IMR-90 (cell line): ENCODE measurements at regions of chr9 and their contacts with region 1.

Region 1: GRCh38 chr9:35553670-35554543 is 51.2 kb upstream of the TESK1 start:
- DNase-seq: peak; percentile 73
- ATAC-seq: peak; percentile 91
- H3K4me3 ChIP-seq: no peak overlapping the region
- H3K27ac ChIP-seq: no peak overlapping the region
- H3K4me1 ChIP-seq: peaks cover 10% of the 10 kb centered on the region
- H3K27me3 ChIP-seq: no peaks in the 10 kb centered on the region
- CTCF ChIP-seq: peak; percentile 98
- POLR2A ChIP-seq: peak; percentile 59; the same call in 1 of the 2 replicates
- RAD21 ChIP-seq: peak; percentile 99

Region 2: GRCh38 chr9:35277628-35278359 is 276.1 kb before region 1 on chr9:
- CTCF ChIA-PET with region 1: no interaction called
- POLR2A ChIA-PET with region 1: no interaction called
- dilution Hi-C with region 1: no loop called
- in situ Hi-C with region 1: no loop called
- intact Hi-C with region 1: loop called (anchors 10 kb)
- DNase-seq: peak; percentile 87
- ATAC-seq: peak; percentile 72
- H3K4me3 ChIP-seq: no peak overlapping the region
- H3K27ac ChIP-seq: no peak overlapping the region
- H3K4me1 ChIP-seq: peaks cover 2% of the 10 kb centered on the region; the same call in 1 of the 2 replicates
- H3K27me3 ChIP-seq: no peaks in the 10 kb centered on the region
- CTCF ChIP-seq: no peak
- POLR2A ChIP-seq: no peak
- RAD21 ChIP-seq: no peak

Region 3: DNA sequence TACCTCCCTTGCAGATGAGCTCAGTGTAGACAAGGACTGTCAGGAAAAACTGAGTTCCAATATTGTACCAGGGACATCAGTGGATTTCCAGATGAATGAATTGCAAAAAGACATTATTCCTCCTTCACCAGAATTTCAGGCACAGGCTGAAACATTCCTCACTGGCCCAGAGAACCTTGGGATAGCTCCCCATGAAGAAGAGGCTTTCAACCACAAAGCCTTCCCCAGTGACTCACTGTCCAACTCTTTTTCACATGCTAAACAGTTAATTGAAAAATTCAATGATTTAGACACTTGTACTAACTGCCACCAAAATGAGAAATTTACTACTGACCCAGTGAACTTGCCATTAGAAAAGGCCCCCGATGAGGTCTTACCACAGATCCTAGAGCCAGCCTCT is 247.6 kb before region 1 on chr9:
- CTCF ChIA-PET with region 1: no interaction called
- POLR2A ChIA-PET with region 1: no interaction called
- dilution Hi-C with region 1: no loop called
- in situ Hi-C with region 1: no loop called
- intact Hi-C with region 1: no loop called
- DNase-seq: peak; percentile 45
- ATAC-seq: peak; percentile 75
- H3K4me3 ChIP-seq: no peak overlapping the region
- H3K27ac ChIP-seq: no peak overlapping the region
- H3K4me1 ChIP-seq: no peaks in the 10 kb centered on the region
- H3K27me3 ChIP-seq: no peaks in the 10 kb centered on the region
- CTCF ChIP-seq: no peak
- POLR2A ChIP-seq: no peak
- RAD21 ChIP-seq: no peak

Region 4: GRCh38 chr9:35489313-35490154 is 64.4 kb before region 1 on chr9 and contains the start of gene RUSC2:
- CTCF ChIA-PET with region 1: interaction called, 18 read pairs
- POLR2A ChIA-PET with region 1: interaction called, 13 read pairs
- dilution Hi-C with region 1: no loop called
- in situ Hi-C with region 1: loop called (anchors 5 kb)
- intact Hi-C with region 1: loop called (anchors 1 kb)
- DNase-seq: peak; percentile 90
- ATAC-seq: peak; percentile 85
- H3K4me3 ChIP-seq: peak within 1 kb of the TSS; percentile 89
- H3K27ac ChIP-seq: peak within 1 kb of the TSS; percentile 96
- H3K4me1 ChIP-seq: peaks cover 3% of the 10 kb centered on the region
- H3K27me3 ChIP-seq: no peaks in the 10 kb centered on the region
- CTCF ChIP-seq: peak; percentile 41
- POLR2A ChIP-seq: peak; percentile 68
- RAD21 ChIP-seq: peak; percentile 52
- total RNA-seq, gene RUSC2: 17.4 and 18.3 TPM in 2 replicates

Region 5: DNA sequence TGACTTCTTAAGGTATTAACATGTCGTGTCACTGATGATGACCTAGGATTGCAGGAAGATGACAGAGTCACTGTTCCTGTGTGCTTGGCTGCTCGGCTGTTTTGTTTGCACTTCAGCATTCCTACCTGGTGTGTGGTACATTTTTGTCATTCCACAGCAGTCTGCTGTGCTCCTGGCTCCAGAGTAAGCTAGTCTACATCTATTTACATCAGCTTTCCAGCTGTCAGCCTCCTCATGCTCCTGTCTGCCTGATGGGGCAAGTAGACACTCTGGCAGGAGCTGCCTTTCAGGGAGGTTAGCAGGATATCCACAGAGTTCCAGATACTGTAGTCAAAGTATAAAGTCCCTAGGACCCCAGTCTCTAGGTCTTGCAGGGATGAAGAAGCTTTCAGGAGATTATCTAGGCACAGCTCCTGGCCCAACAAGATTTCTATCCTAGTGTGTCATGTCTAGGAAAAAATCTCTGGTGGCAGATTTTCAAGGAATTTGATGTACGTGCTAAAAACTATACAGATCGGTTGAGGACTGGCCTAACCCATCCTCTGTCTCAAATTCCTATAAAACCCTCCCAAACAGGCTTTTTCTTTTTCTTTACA is 35.6 kb before region 1 on chr9:
- CTCF ChIA-PET with region 1: interaction called, 5 read pairs
- POLR2A ChIA-PET with region 1: no interaction called
- dilution Hi-C with region 1: no loop called
- in situ Hi-C with region 1: no loop called
- intact Hi-C with region 1: loop called (anchors 2 kb)
- DNase-seq: peak; percentile 94
- ATAC-seq: peak; percentile 68
- H3K4me3 ChIP-seq: no peak overlapping the region
- H3K27ac ChIP-seq: peak overlapping the region; percentile 94
- H3K4me1 ChIP-seq: peaks cover 42% of the 10 kb centered on the region
- H3K27me3 ChIP-seq: no peaks in the 10 kb centered on the region
- CTCF ChIP-seq: no peak
- POLR2A ChIP-seq: peak; percentile 49; the same call in 1 of the 2 replicates
- RAD21 ChIP-seq: no peak

Region 6: DNA sequence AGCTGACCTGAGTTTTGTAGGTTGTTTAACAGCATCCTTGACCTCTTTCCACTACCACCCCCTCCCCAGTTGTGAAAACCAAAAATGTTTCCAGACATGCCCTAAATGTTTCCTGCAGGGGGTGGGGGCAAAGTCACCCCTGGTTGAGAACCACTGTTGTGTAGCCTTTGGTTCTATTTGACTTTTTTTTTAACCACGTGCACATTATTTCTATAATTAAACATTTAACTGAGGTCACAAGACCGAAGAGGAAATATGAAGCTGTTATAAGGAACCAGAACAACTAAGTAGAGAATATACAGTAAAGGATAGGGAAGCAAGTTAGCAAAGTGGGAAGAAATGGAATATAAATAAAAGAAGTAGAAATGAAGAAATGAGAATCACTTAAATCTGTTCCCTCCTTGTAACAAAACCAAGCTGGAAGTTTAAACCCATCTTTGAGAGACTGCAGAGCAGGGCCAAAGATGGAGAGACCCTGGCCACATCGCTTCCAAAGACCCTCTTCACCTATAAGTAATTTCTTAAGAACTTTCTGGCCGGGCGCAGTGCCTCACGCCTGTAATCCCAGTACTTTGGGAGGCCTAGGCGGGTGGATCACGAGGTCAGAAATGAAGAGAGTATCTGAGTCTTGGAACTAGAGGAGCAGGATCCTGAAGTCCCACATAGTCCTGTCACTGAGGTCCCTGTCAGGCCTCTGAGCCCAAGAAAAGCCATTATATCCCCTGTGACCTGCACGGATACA is 82.4 kb after region 1 on chr9:
- CTCF ChIA-PET with region 1: no interaction called
- POLR2A ChIA-PET with region 1: no interaction called
- dilution Hi-C with region 1: no loop called
- in situ Hi-C with region 1: no loop called
- intact Hi-C with region 1: no loop called
- DNase-seq: no peak
- ATAC-seq: no peak
- H3K4me3 ChIP-seq: no peak overlapping the region
- H3K27ac ChIP-seq: no peak overlapping the region
- H3K4me1 ChIP-seq: no peaks in the 10 kb centered on the region
- H3K27me3 ChIP-seq: no peaks in the 10 kb centered on the region; the same call in 1 of the 2 replicates
- CTCF ChIP-seq: no peak
- POLR2A ChIP-seq: no peak
- RAD21 ChIP-seq: no peak

Region 7: GRCh38 chr9:35760651-35761050 is 206.7 kb after region 1 on chr9:
- CTCF ChIA-PET with region 1: interaction called, 10 read pairs
- POLR2A ChIA-PET with region 1: no interaction called
- dilution Hi-C with region 1: no loop called
- in situ Hi-C with region 1: no loop called
- intact Hi-C with region 1: no loop called
- DNase-seq: peak; percentile 41
- ATAC-seq: no peak
- H3K4me3 ChIP-seq: no peak overlapping the region
- H3K27ac ChIP-seq: no peak overlapping the region
- H3K4me1 ChIP-seq: peaks cover 7% of the 10 kb centered on the region; the same call in 1 of the 2 replicates
- H3K27me3 ChIP-seq: peaks cover 2% of the 10 kb centered on the region; the same call in 1 of the 2 replicates
- CTCF ChIP-seq: no peak
- POLR2A ChIP-seq: no peak
- RAD21 ChIP-seq: no peak